ENCODE measurements at regions of chr6 and their contacts with region 1.

Region 1: DNA sequence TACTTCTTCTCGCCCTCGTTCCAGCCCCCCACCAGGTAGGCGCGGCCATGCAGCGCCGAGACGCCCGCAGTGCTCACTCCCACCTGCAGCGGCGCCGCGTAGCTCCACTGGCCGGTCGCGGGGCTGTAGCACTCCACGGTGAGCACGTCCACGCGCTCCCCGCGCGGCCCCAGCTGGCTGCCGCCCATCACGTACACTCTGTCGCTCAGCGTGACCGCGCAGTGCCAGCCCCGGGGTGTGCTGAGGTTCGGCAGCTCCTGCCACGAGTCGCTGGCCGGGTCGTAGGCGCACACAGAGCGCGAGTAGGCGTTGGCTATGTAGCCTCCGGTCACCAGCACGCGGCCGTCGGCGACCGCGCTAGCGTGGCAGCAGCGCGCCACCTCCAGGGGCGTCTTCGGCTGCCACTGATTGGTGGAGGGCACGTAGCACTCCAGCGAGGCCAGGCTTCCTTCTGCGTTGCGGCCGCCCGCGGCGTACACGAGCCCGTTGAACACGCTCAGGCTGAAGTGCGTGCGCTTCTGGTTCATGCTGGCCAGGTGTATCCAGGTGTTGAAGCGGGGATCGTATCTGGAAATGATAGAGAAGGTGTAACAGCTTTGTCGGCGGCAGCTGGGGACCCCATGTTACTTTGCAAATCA is 13.7 kb downstream of the KLHL31 start:
- DNase-seq: peak; percentile 64
- H3K4me3 Mint-ChIP-seq: peak overlapping the region; percentile 90
- H3K27ac Mint-ChIP-seq: peak overlapping the region; percentile 81
- H3K4me1 Mint-ChIP-seq: peaks cover 31% of the 10 kb centered on the region
- H3K27me3 Mint-ChIP-seq: peaks cover 30% of the 10 kb centered on the region

Region 2: GRCh38 chr6:53064726-53065215 is 587.1 kb before region 1 on chr6:
- intact Hi-C with region 1: loop called (anchors 5 kb)
- DNase-seq: peak; percentile 94
- H3K4me3 Mint-ChIP-seq: peak overlapping the region; percentile 99
- H3K27ac Mint-ChIP-seq: peak overlapping the region; percentile 99
- H3K4me1 Mint-ChIP-seq: peaks cover 46% of the 10 kb centered on the region
- H3K27me3 Mint-ChIP-seq: peaks cover 2% of the 10 kb centered on the region

Region 3: GRCh38 chr6:53359072-53359842 is 292.6 kb before region 1 on chr6:
- intact Hi-C with region 1: loop called (anchors 5 kb)
- DNase-seq: peak; percentile 93
- H3K4me3 Mint-ChIP-seq: peak overlapping the region; percentile 92
- H3K27ac Mint-ChIP-seq: peak overlapping the region; percentile 100
- H3K4me1 Mint-ChIP-seq: peaks cover 50% of the 10 kb centered on the region
- H3K27me3 Mint-ChIP-seq: peaks cover 5% of the 10 kb centered on the region

Region 4: GRCh38 chr6:53492860-53493634 is 158.8 kb before region 1 on chr6:
- intact Hi-C with region 1: loop called (anchors 1 kb)
- DNase-seq: no peak
- H3K4me3 Mint-ChIP-seq: no peak overlapping the region
- H3K27ac Mint-ChIP-seq: peak overlapping the region; percentile 25
- H3K4me1 Mint-ChIP-seq: peaks cover 15% of the 10 kb centered on the region
- H3K27me3 Mint-ChIP-seq: peaks cover 22% of the 10 kb centered on the region

Region 5: DNA sequence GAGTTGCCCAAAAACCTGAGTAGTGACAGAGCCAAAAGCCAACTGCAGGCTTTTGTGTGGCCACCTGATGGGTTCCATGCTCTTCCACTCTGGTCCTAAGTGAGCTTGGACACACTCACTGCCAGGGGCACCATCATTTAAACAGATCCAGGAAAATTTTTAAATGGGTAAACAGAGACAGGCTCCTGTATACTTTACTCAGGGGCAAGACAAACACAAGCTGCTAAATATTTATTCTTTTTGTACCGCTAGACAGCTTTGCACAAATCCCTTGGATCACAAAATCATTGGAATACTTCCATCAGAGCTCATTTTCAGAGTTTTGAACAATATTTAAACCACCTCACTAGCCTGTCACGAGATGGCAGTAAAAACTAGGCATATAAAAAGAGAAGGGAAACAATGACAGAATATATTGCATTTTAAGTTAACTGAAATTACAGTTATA is 138.3 kb before region 1 on chr6:
- intact Hi-C with region 1: no loop called
- DNase-seq: no peak
- H3K4me3 Mint-ChIP-seq: no peak overlapping the region
- H3K27ac Mint-ChIP-seq: no peak overlapping the region
- H3K4me1 Mint-ChIP-seq: no peaks in the 10 kb centered on the region
- H3K27me3 Mint-ChIP-seq: no peaks in the 10 kb centered on the region

Region 6: DNA sequence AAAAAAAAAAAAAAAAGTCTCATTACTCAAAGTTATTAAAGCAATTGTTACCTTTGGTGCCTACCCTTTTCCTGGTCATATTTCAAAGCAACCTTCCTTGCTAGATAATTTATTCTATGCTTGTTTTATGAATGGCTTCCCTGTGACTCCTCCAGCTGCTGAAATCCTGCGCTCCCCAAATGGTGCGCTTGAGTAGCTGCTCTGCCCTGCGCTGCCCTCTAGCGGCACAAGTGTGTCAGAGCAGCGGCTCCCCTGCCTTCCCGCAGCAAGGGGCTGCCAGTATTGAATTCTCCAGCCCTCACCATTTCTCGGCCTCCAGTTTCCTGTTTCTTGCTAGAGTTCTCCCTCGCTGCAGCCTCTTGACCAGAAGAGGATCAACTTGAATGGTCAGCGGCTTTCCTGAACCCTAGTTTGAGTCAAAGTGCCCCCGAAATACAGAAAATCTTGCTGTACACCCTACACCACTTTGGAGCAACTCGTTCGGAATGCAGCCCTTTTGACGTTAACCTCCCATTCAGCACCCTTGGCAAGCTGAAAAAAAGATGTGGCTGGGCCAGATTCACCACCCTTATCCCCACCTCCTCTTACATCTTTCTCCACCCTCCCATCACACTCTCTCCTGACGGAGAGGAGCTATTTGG is 74.0 kb after region 1 on chr6:
- intact Hi-C with region 1: loop called (anchors 1 kb)
- DNase-seq: peak; percentile 60
- H3K4me3 Mint-ChIP-seq: no peak overlapping the region
- H3K27ac Mint-ChIP-seq: no peak overlapping the region
- H3K4me1 Mint-ChIP-seq: peaks cover 14% of the 10 kb centered on the region
- H3K27me3 Mint-ChIP-seq: peaks cover 14% of the 10 kb centered on the region

Region 7: GRCh38 chr6:53794720-53795253 is 142.9 kb after region 1 on chr6 and contains the start of gene LRRC1:
- intact Hi-C with region 1: loop called (anchors 2 kb)
- DNase-seq: peak; percentile 86
- H3K4me3 Mint-ChIP-seq: peak within 1 kb of the TSS; percentile 96
- H3K27ac Mint-ChIP-seq: peak within 1 kb of the TSS; percentile 78
- H3K4me1 Mint-ChIP-seq: peaks cover 41% of the 10 kb centered on the region
- H3K27me3 Mint-ChIP-seq: peaks cover 53% of the 10 kb centered on the region
- total RNA-seq, gene LRRC1: 1.7 and 1.9 TPM in 2 replicates

Region 8: GRCh38 chr6:53829698-53830221 is 177.9 kb after region 1 on chr6:
- intact Hi-C with region 1: no loop called
- DNase-seq: no peak
- H3K4me3 Mint-ChIP-seq: no peak overlapping the region
- H3K27ac Mint-ChIP-seq: no peak overlapping the region
- H3K4me1 Mint-ChIP-seq: no peaks in the 10 kb centered on the region
- H3K27me3 Mint-ChIP-seq: peaks cover 1% of the 10 kb centered on the region

Region 9: DNA sequence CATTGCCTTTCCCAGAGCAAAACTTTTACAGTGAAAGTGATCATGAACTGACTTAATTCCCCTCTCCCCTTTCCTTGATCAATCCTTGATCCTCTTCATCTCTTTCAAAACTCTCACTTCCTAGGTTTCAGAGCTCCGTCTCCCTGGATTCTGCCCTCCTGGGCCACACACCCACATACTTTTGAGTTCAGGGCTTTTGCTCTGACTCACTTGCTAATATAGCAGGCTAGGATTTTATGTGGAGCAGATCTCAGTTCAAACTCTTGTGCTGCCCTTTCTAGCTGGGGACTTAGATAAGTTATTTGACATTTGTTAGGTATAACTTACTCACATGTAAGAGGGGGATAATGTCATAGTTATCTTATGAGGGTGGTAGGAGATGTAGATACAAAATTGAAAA is 350.2 kb after region 1 on chr6:
- intact Hi-C with region 1: no loop called
- DNase-seq: no peak
- H3K4me3 Mint-ChIP-seq: no peak overlapping the region
- H3K27ac Mint-ChIP-seq: no peak overlapping the region
- H3K4me1 Mint-ChIP-seq: peaks cover 5% of the 10 kb centered on the region
- H3K27me3 Mint-ChIP-seq: no peaks in the 10 kb centered on the region